HepG2 (cell line): ENCODE measurements at regions of chr6 and their contacts with region 1.

Region 1: DNA sequence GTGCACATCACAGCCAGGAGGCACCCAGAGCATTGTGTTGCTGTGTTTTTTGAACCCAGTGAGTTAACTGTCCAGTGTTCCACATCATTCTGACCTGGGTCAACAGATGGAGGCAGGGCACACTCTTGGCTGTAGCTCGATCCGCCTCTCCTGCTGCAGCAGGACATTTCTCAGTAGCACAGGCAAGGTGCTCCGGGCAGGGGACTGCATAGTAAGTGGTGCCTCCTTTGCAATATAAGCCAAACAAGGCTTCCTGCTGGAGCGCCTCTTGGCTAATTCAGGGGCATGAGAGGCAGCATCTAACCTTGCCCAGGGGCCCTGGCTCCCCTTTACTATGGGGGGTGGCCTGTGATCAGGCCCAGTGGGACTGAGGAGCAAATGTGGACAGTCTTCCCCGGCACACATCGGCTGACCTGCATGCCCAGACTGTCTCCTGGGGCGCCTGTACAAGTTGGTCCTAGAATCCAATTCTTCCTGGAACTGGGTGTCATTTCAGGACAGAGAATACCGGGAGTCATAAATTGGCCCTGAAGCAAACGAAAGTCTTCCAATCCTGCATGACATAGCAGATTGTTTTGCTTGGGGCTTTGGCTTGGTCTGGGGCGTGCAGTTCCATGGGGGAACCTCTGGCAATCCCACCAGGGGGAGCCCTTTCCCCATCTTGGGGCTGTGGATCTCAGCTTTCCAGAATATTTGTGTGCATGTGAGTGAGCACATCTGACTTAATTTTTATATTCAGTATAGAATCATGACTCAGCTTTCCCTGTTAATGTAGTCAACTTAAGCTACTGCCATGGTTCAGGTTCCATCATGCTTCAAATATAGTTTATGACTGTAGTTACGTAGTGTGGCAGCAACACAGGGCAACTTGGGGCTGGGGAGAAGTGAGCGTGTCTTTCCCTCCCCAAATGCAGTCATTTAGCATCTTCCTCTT is 56.0 kb upstream of the DDR1 start:
- DNase-seq: peak; percentile 85
- ATAC-seq: peak; percentile 92
- H3K4me3 ChIP-seq: peak overlapping the region; percentile 45 to 76 (median 63)
- H3K27ac ChIP-seq: peak overlapping the region; percentile 69
- H3K4me1 ChIP-seq: peaks cover 61% of the 10 kb centered on the region
- H3K27me3 ChIP-seq: no peaks in the 10 kb centered on the region
- CTCF ChIP-seq: peak; percentile 97
- EP300 ChIP-seq: peak in 1 of 2 experiments; percentile 52; a peak in 1 of 4 replicates
- POLR2A ChIP-seq: no peak
- RAD21 ChIP-seq: peak; percentile 97

Region 2: DNA sequence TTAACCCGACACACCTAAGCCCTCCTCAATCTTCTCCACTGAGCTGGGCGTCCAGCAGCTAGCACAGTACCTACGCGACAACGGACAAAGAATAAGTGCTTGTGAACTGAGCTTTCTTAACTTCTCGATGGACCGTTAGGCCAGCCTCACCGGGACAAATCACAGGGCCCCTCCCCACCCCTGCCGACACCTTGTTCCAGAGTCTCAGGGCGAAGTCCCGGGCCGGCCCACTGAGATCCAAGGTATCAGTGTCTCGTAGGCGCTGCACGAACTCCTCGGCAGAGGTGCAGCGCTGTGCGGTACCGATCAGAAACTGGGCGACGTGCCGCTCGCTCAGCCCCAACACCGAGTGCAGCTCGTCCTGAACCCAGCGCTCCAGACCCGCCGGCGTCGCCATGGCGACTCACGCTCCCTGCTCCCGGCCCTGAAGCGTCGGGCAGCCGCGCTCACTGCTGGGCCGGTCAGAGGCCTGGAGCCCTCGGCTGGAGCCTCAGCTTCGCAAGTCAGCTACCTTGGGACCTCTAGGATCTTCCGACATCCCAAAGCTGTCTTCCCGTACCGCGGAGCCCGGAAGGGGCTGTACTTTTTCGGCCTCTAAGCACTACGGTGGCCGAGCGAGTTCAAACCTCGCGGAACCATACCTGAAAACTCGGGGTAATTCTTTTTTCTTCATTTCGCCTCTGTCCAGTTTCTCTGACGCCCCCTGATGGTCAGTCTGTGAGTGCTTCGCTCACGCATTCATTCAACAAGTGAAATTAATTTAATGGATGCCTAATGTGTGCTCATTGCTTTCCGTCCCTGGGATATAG is 155.6 kb before region 1 on chr6 and contains the start of gene DHX16:
- CTCF ChIA-PET with region 1: no interaction called
- POLR2A ChIA-PET with region 1: interaction called, 6 read pairs
- in situ Hi-C with region 1: no loop called
- intact Hi-C with region 1: loop called (anchors 10 kb)
- DNase-seq: peak; percentile 97
- ATAC-seq: peak; percentile 89
- H3K4me3 ChIP-seq: peak within 1 kb of the TSS; percentile 76 to 95 (median 82)
- H3K27ac ChIP-seq: peak within 1 kb of the TSS; percentile 67
- H3K4me1 ChIP-seq: peaks cover 23% of the 10 kb centered on the region
- H3K27me3 ChIP-seq: no peaks in the 10 kb centered on the region; a peak in 1 of 5 replicates
- CTCF ChIP-seq: peak; percentile 91
- EP300 ChIP-seq: peak in 1 of 2 experiments; percentile 53; a peak in 3 of 4 replicates
- POLR2A ChIP-seq: peak; percentile 79 to 81
- RAD21 ChIP-seq: peak; percentile 71
- total RNA-seq, gene DHX16: 48.2 and 58.5 TPM in 2 replicates

Region 3: GRCh38 chr6:30769088-30769852 is 59.0 kb before region 1 on chr6:
- CTCF ChIA-PET with region 1: interaction called, 3 read pairs
- POLR2A ChIA-PET with region 1: interaction called, 29 read pairs
- in situ Hi-C with region 1: no loop called
- intact Hi-C with region 1: loop called (anchors 1 kb)
- DNase-seq: peak; percentile 96
- ATAC-seq: peak; percentile 90
- H3K4me3 ChIP-seq: peak overlapping the region; percentile 35 to 69 (median 44)
- H3K27ac ChIP-seq: peak overlapping the region; percentile 98
- H3K4me1 ChIP-seq: peaks cover 79% of the 10 kb centered on the region
- H3K27me3 ChIP-seq: no peaks in the 10 kb centered on the region
- CTCF ChIP-seq: no peak; the same call in 1 of the 2 replicates
- EP300 ChIP-seq: peak; percentile 90 to 91
- POLR2A ChIP-seq: peak; percentile 88 to 91
- RAD21 ChIP-seq: peak; percentile 27; the same call in 1 of the 2 replicates

Region 4: GRCh38 chr6:30800871-30801270 is 27.4 kb before region 1 on chr6:
- CTCF ChIA-PET with region 1: no interaction called
- POLR2A ChIA-PET with region 1: no interaction called
- in situ Hi-C with region 1: no loop called
- intact Hi-C with region 1: no loop called
- DNase-seq: no peak
- ATAC-seq: no peak
- H3K4me3 ChIP-seq: no peak overlapping the region
- H3K27ac ChIP-seq: peak overlapping the region; percentile 10
- H3K4me1 ChIP-seq: peaks cover 71% of the 10 kb centered on the region
- H3K27me3 ChIP-seq: no peaks in the 10 kb centered on the region
- CTCF ChIP-seq: no peak
- EP300 ChIP-seq: no peak; a peak in 1 of 4 replicates
- POLR2A ChIP-seq: no peak
- RAD21 ChIP-seq: no peak

Region 5: DNA sequence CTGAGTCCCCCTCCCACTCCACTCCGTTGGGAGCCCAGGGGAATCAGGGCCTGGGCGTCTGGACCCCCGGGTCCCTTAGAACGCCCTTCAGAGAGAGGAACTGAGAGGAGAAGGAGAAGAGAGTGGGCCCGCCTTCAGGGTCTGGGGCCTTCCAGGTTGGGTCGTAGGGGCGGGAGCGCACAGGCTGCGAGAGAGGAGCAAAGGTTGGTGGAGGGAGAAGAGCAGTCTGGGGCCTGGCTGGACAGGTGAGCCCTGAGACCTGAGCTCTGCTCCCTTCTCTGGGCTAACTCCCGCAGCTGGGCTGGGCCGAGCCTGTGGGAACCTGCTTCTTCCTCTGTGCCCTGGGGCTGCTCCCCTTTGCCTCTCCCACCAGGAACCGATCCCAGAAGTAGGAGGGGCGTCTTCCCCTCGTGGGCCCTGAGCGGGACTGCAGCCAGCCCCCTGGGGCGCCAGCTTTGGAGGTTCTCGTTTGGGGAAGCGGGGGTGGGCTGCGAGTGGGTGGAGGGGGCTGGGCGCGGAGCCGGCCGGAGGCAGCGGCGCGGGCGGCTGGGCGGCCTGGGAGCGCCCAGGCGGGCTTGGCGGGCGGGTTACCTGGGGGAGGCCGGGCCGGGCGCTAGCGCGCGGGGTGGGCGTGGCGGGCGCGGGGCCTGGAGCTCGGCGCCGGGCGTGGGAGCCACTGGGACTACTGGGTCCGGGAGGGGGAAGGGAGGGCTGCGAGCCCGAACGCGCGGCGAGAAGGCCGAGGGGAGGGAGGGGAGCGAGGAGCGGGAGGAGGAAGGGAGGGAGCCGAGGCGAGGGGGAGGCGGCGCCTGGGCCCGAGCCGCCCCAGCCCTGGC is 55.6 kb after region 1 on chr6 and contains the start of gene DDR1:
- CTCF ChIA-PET with region 1: interaction called, 76 read pairs
- POLR2A ChIA-PET with region 1: interaction called, 20 read pairs
- in situ Hi-C with region 1: loop called (anchors 5 kb)
- intact Hi-C with region 1: no loop called
- DNase-seq: peak; percentile 38
- ATAC-seq: peak; percentile 57
- H3K4me3 ChIP-seq: peak within 1 kb of the TSS; percentile 80 to 91 (median 82)
- H3K27ac ChIP-seq: peak within 1 kb of the TSS; percentile 44
- H3K4me1 ChIP-seq: peaks cover 56% of the 10 kb centered on the region
- H3K27me3 ChIP-seq: peaks cover 6 to 27% of the 10 kb centered on the region in 2 experiments
- CTCF ChIP-seq: no peak
- EP300 ChIP-seq: no peak
- POLR2A ChIP-seq: no peak
- RAD21 ChIP-seq: no peak
- total RNA-seq, gene DDR1: 7.0 and 16.7 TPM in 2 replicates

Region 6: DNA sequence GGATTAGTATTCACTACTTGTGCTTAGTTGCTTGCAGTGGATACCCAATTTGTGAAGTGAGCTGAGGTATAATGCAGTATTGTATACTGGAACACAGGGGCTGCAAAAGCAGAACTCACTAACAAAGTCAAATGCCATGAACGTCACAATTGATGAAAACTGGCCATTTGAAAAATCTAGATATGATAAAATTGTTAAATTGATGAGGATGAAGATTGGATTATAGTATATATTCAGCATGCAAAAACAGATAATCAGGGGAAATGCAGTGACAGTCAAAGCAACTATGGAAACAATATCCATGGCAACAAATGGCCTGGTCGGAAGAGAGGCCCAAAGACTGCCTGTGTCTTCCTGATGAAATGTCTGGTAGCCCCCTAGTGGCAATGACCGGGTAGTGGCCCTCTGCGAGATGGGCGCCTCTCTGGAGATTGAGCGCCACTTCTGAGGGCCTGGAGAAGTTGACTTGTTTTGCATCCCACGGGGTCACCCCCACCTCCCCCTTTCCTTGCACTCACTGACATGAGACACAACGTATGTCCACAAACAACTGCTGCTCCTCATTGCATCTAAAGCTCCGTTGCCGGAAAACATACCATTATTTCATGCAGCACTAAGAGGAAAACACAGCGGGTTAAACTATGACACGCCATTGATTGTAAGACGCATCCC is 240.5 kb after region 1 on chr6:
- CTCF ChIA-PET with region 1: no interaction called
- POLR2A ChIA-PET with region 1: no interaction called
- in situ Hi-C with region 1: no loop called
- intact Hi-C with region 1: loop called (anchors 5 kb)
- DNase-seq: peak; percentile 73
- ATAC-seq: peak; percentile 96
- H3K4me3 ChIP-seq: no peak overlapping the region
- H3K27ac ChIP-seq: no peak overlapping the region
- H3K4me1 ChIP-seq: no peaks in the 10 kb centered on the region
- H3K27me3 ChIP-seq: peaks cover 0 to 7% of the 10 kb centered on the region in 2 experiments; a peak in 3 of 5 replicates
- CTCF ChIP-seq: peak; percentile 93
- EP300 ChIP-seq: no peak
- POLR2A ChIP-seq: no peak
- RAD21 ChIP-seq: peak; percentile 53